PC-9 (cell line): ENCODE measurements at regions of chr1 and their contacts with region 1.

Region 1: DNA sequence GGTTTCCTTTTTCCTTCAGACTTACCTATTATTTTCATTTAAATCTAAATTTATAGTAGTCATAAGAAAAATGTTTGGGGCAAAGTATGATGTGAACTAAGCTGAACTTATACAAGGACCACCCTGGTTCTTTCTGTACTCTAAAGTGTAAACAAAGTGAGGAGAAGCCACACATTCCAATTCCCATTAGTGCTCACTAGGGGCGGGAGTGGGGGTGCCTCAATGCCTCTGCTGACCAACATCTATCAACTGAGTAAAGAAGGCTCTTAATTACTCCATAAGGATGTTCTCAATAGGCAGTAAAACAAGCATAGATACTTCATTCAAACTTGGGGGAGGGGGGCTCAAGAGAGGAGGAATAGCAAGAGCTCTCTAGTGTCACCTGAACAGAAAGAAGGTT is 151.7 kb downstream of the CDC42BPA start:
- DNase-seq: no peak
- H3K4me3 ChIP-seq: no peak overlapping the region
- H3K27ac ChIP-seq: no peak overlapping the region
- H3K4me1 ChIP-seq: no peaks in the 10 kb centered on the region
- H3K27me3 ChIP-seq: no peaks in the 10 kb centered on the region
- CTCF ChIP-seq: no peak

Region 2: DNA sequence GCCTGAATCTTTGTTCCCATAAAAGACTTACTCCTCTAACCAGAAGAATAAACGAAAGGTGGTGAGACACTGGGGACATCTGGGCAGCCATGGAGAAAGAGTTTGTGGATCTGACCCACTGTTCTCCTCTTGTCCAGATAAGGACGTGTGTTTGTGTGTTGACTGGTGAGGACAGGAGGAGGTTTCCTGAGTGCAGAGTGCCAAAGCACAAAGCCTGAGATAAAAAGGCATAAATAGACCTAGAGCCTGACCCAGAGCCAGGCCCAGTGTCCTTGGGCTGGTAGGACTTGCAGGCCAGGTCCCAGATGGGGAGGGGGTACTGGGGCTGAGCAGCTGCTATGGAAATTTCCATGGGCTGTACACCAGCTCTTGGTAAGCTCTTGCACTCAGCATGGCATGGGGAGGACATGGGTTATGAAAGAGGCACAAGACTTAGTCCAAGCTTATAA is 246.1 kb before region 1 on chr1:
- CTCF ChIA-PET with region 1: no interaction called
- POLR2A ChIA-PET with region 1: no interaction called
- intact Hi-C with region 1: no loop called
- DNase-seq: no peak
- H3K4me3 ChIP-seq: no peak overlapping the region
- H3K27ac ChIP-seq: no peak overlapping the region
- H3K4me1 ChIP-seq: no peaks in the 10 kb centered on the region
- H3K27me3 ChIP-seq: no peaks in the 10 kb centered on the region
- CTCF ChIP-seq: no peak

Region 3: GRCh38 chr1:227094249-227094966 is 72.2 kb before region 1 on chr1:
- CTCF ChIA-PET with region 1: no interaction called
- POLR2A ChIA-PET with region 1: no interaction called
- intact Hi-C with region 1: no loop called
- DNase-seq: no peak
- H3K4me3 ChIP-seq: no peak overlapping the region
- H3K27ac ChIP-seq: no peak overlapping the region
- H3K4me1 ChIP-seq: no peaks in the 10 kb centered on the region
- H3K27me3 ChIP-seq: no peaks in the 10 kb centered on the region
- CTCF ChIP-seq: no peak

Region 4: DNA sequence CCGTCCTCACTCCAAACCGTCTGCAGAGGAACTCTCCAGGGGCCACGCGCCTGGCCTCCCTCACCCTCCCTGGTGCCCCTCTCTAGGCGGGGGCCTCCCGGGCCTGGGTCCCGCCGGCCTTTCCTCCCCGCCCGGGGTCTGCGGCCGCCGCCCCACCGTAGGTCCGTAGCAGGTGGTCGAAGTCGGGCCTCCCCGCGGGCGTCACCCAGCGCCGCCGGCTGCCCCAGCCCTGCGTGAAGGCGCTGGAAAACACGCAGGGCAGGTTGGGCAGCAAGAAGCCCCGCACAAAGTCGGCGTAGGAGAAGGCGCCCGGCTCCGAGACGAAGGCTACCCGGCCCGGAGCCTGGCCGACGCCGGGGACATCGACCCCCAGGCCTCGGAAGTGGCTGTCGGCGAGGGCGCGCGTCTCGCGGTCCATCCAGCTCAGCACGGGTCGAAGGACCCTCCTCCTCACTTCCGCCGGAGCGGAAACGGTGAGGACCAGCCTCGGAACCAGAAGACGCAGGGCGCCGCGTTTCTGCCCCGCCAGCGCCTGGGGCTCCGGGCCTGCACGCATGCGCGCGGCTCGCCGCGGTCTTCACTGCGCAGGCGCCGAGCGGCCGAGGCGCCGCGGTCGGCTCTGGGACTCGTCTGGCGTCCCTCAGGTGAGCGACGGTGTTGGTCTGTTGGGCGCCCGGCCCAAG is 568.4 kb after region 1 on chr1 and contains the starts of genes JMJD4 and SNAP47:
- CTCF ChIA-PET with region 1: no interaction called
- POLR2A ChIA-PET with region 1: interaction called, 11 read pairs
- intact Hi-C with region 1: no loop called
- DNase-seq: peak; percentile 75 to 97
- H3K4me3 ChIP-seq: peak within 1 kb of the TSS; percentile 99
- H3K27ac ChIP-seq: 0 out of 2 replicates have a peak within 1 kb of the TSS, but pooled peaks have one; percentile 1
- H3K4me1 ChIP-seq: peaks cover 17% of the 10 kb centered on the region; the same call in 1 of the 2 replicates
- H3K27me3 ChIP-seq: no peaks in the 10 kb centered on the region
- CTCF ChIP-seq: no peak
- total RNA-seq, gene JMJD4: 15.1 and 20.9 TPM in 2 replicates
- total RNA-seq, gene SNAP47: 66.3 and 70.2 TPM in 2 replicates